ENCODE measurements at regions of chr7 and their contacts with region 1.

Region 1: DNA sequence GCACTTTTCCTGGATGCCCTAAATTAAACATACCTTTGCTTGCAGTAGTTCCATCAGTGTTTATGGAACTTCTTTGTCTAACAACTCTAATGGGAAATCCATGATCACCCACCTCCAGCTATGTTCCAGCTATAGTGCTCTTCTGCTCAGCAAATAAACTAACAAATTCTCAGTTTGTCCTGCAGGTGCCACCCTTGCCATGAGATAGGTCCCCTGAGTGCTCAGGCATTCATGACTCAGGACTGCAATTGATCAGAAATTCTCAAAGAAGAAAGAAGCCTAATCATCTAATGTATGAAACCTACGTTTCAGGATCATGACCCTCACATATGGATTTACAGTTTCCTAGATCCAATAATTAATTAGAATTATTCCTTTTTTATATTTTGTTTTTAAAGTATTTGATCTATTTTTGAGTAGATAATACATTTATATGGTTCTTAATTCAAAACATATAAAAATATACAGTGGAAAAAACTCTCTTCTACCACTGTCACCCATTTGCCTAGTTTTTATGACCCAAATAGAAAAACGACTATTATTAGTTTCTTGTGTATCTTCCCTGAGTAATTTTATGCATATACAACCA is 48.7 kb upstream of the DYNC1I1 start:
- DNase-seq: peak in 38 of 42 donors; percentile 10 to 77 (median 52)

Region 2: GRCh38 chr7:95628831-95629439 is 94.8 kb before region 1 on chr7:
- intact Hi-C with region 1: no loop called
- DNase-seq: no peak

Region 3: DNA sequence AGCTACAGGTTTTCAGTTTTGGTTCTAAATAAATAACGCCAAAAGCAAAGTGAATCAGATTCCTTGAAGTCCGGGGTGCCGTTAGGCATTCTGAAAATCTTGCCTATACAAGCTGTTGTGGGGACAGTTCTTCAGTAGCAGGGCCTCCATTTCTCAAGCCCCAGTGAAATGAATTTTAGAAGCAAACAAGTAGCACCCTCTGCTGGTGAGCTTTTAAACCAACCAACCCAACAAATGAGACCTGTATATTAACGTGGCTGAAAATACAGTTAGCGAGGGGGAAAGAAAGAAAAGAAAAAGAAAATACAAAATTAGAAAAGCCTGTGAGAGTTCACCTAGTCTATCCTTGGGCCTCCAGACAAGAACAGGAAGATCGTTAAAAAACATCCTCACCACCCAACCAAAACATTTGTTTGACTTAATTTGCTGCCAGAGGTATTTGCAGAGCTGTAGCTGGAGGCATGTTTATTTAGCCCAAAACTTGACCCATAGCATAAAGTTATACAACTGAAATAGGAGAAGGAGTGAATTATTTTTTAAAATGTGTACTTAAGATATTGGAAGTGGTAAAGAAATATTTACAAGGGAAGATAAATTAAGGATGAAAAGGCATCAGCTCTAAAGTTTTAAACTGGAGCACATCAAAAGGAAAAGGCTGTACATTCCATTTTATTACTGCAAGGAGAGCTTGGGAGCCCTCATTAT is 147.5 kb after region 1 on chr7:
- intact Hi-C with region 1: loop called (anchors 5 kb)
- DNase-seq: peak in 33 of 42 donors; percentile 4 to 84 (median 52)